Ovary (tissue), 10 donors: ENCODE measurements at regions of chr12 and their contacts with region 1.

Region 1: GRCh38 chr12:123388177-123388947 is 4.4 kb downstream of the KMT5A start:
- DNase-seq: peak; percentile 75 to 86 (median 82)
- H3K4me3 ChIP-seq: peak overlapping the region; percentile 38
- H3K27ac ChIP-seq: peak overlapping the region; percentile 66 to 67
- H3K4me1 ChIP-seq: peaks cover 12% of the 10 kb centered on the region
- H3K27me3 ChIP-seq: no peaks in the 10 kb centered on the region
- CTCF ChIP-seq: no peak
- EP300 ChIP-seq: no peak
- POLR2A ChIP-seq: no peak

Region 2: GRCh38 chr12:123365025-123365917 is 23.1 kb before region 1 on chr12:
- intact Hi-C with region 1: loop called in 1 of 4 experiments (anchors 2 kb)
- DNase-seq: peak; percentile 98 to 99 (median 98)
- H3K4me3 ChIP-seq: peak overlapping the region; percentile 67
- H3K27ac ChIP-seq: peak overlapping the region; percentile 83 to 93
- H3K4me1 ChIP-seq: peaks cover 6% of the 10 kb centered on the region
- H3K27me3 ChIP-seq: no peaks in the 10 kb centered on the region
- CTCF ChIP-seq: peak in 2 of 3 donors; percentile 80 to 83
- EP300 ChIP-seq: peak; percentile 50
- POLR2A ChIP-seq: peak; percentile 55

Region 3: DNA sequence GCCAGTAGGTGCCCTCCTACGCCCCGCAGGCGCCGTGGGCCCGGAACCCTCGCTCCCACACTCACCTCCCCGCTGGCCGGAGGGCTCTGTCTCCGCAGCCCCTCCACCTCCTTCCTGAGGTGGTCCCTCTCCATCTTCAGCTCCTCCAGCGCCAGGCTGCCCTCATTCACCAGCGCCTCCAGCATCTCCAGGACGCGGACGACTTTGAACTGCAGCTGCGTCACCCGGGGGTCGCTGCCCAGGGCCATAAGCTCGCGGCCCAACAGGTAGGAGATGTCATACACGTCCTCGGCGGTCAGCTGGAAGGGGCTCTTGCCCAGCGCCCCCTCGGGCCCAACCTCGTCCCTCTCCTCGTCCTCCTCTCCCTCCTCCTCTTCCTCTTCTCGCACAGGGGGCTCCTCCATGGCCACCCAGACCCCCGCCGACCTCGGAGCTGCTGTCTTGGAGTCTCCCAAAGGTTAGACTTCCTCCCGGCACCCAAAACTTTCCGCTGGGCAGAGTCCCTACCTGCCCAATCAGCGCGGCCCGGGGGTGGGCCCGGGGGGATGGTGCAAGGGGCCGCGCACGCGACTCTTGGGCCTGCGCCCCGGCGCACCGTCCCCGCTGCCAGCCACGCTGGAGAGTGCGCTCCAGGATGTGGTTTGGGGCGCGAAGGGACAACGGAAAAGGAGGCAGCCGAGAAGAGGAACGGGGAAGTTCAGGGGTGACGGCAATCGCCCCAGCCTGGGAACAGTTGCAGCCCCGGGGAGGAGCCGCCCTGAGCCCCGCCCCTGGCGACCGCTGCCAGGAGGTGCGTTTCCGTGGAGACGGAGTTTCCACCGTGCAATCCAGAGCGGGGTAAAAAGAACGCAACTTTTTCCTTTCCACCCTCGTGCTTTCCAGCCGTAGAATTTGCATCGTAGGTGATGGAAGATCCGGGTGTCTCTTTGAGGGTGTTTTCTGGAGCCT is 47.9 kb after region 1 on chr12 and contains the start of gene RILPL2:
- intact Hi-C with region 1: no loop called
- DNase-seq: peak; percentile 78 to 91 (median 87)
- H3K4me3 ChIP-seq: peak within 1 kb of the TSS; percentile 69
- H3K27ac ChIP-seq: peak within 1 kb of the TSS in 1 of 2 donors; percentile 16
- H3K4me1 ChIP-seq: peaks cover 10% of the 10 kb centered on the region
- H3K27me3 ChIP-seq: no peaks in the 10 kb centered on the region
- CTCF ChIP-seq: no peak
- EP300 ChIP-seq: no peak
- POLR2A ChIP-seq: peak; percentile 35
- total RNA-seq, gene RILPL2: 4.6 to 6.3 (median 5.8) TPM